ENCODE measurements at regions of chr1 and their contacts with region 1.

Region 1: DNA sequence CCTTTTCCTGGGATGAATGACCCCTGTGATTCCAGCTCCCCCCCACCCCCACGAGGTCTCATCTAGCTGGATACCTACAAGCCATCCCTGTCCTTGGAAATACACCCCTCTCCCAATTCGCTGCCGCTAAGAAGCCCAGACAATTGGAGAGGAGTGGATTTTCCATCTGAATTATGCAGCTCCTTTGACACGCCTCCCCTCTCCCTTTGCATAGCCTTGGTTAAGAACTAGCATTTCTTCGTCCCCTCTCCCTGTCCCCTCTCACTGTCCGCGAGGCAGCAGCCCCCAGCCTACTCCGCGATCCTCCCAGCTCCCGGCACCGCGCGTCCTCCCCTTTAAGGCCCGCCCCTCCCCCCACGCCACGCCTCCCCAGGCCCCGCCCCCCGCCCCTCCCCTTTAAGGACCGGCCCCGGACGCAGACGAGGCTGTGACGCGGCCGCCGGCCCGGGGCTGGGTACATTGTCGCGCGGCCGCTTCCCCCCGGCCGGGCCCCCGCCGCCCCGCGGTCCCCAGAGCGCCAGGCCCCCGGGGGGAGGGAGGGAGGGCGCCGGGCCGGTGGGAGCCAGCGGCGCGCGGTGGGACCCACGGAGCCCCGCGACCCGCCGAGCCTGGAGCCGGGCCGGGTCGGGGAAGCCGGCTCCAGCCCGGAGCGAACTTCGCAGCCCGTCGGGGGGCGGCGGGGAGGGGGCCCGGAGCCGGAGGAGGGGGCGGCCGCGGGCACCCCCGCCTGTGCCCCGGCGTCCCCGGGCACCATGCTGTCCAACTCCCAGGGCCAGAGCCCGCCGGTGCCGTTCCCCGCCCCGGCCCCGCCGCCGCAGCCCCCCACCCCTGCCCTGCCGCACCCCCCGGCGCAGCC is at the start of gene MAPKAPK2:
- DNase-seq: peak; percentile 79
- H3K4me3 ChIP-seq: peak within 1 kb of the TSS; percentile 68
- H3K27ac ChIP-seq: peak within 1 kb of the TSS; percentile 94
- H3K4me1 ChIP-seq: peaks cover 8% of the 10 kb centered on the region
- H3K27me3 ChIP-seq: no peaks in the 10 kb centered on the region
- CTCF ChIP-seq: no peak
- total RNA-seq, gene MAPKAPK2: 61.4 to 71.1 TPM

Region 2: DNA sequence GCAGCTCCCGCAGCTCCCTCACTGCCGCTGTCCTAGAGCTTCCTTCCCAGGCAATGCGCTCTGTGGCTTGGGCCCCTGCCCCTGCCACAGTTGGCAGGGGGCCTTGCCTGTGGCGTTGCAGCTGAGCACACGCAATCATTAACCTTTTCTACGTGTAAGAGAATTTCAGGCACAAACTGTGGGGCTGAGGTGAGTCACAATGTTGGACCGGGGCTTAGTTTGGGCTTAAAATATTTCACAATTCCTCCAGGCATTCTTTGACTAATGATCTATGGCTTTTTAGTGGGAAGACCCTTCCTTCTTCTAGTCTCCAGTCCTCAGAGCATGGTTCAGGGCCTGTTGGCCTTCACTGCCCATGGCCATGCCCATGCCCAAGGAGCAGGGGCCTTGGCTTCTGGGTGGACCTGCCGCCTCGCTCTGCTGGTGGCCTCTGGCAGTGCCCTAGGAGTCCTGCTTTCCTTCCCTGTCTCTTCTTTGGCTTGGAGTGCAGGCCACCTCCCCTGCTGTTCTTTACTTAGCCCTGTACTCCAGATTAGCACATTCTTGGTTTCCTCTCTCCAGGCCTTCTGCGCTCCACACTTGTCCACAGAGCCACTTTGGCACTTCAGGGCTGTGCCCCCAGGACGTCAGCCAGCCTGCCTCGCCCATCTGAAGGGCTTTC is 39.2 kb after region 1 on chr1:
- intact Hi-C with region 1: loop called (anchors 5 kb)
- DNase-seq: no peak
- H3K4me3 ChIP-seq: no peak overlapping the region
- H3K27ac ChIP-seq: no peak overlapping the region
- H3K4me1 ChIP-seq: no peaks in the 10 kb centered on the region
- H3K27me3 ChIP-seq: no peaks in the 10 kb centered on the region
- CTCF ChIP-seq: no peak